Head of caudate nucleus (tissue), 42 donors: ENCODE measurements at regions of chr6 and their contacts with region 1.

Region 1: GRCh38 chr6:19851241-19852089 is 14.3 kb downstream of the ID4 start:
- DNase-seq: peak in 23 of 42 donors; percentile 19 to 80 (median 50)

Region 2: GRCh38 chr6:18595774-18596530 is 1255.5 kb before region 1 on chr6:
- intact Hi-C with region 1: loop called (anchors 10 kb)
- DNase-seq: peak; percentile 12 to 91 (median 76)

Region 3: DNA sequence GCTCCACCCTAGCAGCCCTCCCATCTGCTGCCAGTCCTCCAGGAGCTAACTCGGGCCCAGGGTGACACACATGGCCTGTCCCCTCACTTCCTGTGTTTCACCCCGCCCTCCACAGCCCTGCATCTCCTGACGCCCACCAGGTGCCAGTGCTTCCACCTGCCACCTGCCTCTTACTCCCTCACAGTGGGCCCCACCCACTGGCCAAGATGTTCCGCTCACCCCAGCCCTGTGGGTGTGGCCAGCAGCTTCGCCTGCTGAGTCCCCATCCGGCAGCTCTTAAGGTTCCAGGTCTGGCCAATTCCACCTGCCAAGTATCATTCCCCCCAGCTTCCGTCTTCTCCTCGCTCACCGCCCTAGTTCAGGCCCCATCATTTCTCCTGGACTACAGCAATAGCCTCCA is 176.7 kb after region 1 on chr6:
- intact Hi-C with region 1: no loop called
- DNase-seq: no peak